ENCODE measurements at regions of chrX and their contacts with region 1.

Region 1: GRCh38 chrX:138756234-138756633 is 44.7 kb upstream of the FGF13 start:
- DNase-seq: no peak
- CTCF ChIP-seq: no peak

Region 2: GRCh38 chrX:139559383-139560042 is 803.3 kb after region 1 on chrX:
- in situ Hi-C with region 1: loop called (anchors 25 kb)
- DNase-seq: peak; percentile 31
- CTCF ChIP-seq: peak; percentile 27

Measured in GM13976 (cell line).